ENCODE measurements at regions of chr12 and their contacts with region 1.

Region 1: GRCh38 chr12:104966677-104967076 is 8.6 kb upstream of the SLC41A2 start:
- DNase-seq: no peak
- H3K4me3 ChIP-seq: no peak overlapping the region
- H3K27ac ChIP-seq: no peak overlapping the region
- H3K4me1 ChIP-seq: no peaks in the 10 kb centered on the region
- H3K27me3 ChIP-seq: no peaks in the 10 kb centered on the region
- CTCF ChIP-seq: no peak
- EP300 ChIP-seq: no peak
- POLR2A ChIP-seq: no peak
- RAD21 ChIP-seq: no peak

Region 2: GRCh38 chr12:104976733-104977132 is 10.1 kb after region 1 on chr12:
- CTCF ChIA-PET with region 1: interaction called, 10 read pairs
- POLR2A ChIA-PET with region 1: no interaction called
- DNase-seq: peak in 1 of 2 experiments; percentile 57
- H3K4me3 ChIP-seq: no peak overlapping the region
- H3K27ac ChIP-seq: no peak overlapping the region
- H3K4me1 ChIP-seq: no peaks in the 10 kb centered on the region
- H3K27me3 ChIP-seq: no peaks in the 10 kb centered on the region
- CTCF ChIP-seq: peak; percentile 36 to 53 (median 46)
- EP300 ChIP-seq: no peak
- POLR2A ChIP-seq: no peak
- RAD21 ChIP-seq: peak; percentile 24 to 43; a peak in 3 of 4 replicates

Measured in H1 (cell line).